ENCODE measurements at regions of chr15 and their contacts with region 1.

Region 1: DNA sequence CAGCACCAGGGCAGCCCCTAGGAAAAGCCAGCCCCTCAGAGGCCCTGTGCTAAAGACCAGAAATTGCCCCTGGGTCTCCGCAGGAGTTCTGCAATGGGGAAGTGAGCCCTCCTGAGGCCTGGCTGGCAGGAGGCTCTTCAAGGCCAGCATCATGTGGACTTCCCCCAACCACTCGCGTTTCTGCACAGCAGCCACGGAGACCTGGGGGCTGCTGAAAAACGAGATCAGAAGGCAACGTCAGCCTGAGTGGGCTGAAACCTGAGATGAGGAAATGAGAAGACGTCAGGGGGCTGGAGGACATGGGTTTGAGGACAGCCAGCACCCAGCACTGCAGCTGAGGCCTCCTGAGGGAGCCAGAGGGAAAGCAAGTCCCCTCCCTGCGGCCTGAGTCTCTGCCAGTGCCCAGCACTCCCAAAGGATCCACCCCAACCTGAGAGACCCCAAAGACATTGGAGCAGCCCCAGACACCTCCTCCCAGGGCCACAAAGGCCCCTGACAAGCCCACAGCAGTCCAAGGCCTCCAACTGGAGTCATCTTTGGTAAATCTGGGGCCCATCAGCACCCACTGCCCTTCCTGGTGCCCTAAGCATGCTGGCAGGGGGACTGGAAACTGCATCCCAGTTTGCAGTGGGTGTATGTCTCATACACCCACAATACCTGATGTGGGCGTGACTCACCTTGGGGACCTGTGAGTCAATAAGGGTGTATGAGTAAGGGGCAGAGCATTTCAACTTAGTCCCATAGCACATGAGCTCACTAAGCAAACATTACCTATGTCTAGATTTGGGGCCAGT is 29.2 kb upstream of the CYP11A1 start:
- DNase-seq: peak; percentile 82
- H3K4me3 Mint-ChIP-seq: peak overlapping the region; percentile 36
- H3K27ac Mint-ChIP-seq: peak overlapping the region; percentile 93
- H3K4me1 Mint-ChIP-seq: peaks cover 82% of the 10 kb centered on the region
- H3K27me3 Mint-ChIP-seq: no peaks in the 10 kb centered on the region

Region 2: GRCh38 chr15:74433592-74434262 is 37.1 kb after region 1 on chr15 and contains the start of gene SEMA7A:
- CTCF ChIA-PET with region 1: interaction called, 14 read pairs
- POLR2A ChIA-PET with region 1: interaction called, 13 read pairs
- intact Hi-C with region 1: no loop called
- DNase-seq: peak; percentile 90
- H3K4me3 Mint-ChIP-seq: peak within 1 kb of the TSS; percentile 86
- H3K27ac Mint-ChIP-seq: peak within 1 kb of the TSS; percentile 89
- H3K4me1 Mint-ChIP-seq: peaks cover 58% of the 10 kb centered on the region
- H3K27me3 Mint-ChIP-seq: no peaks in the 10 kb centered on the region
- total RNA-seq, gene SEMA7A: 65.9 to 68.4 TPM

Region 3: GRCh38 chr15:74438721-74439316 is 42.2 kb after region 1 on chr15:
- CTCF ChIA-PET with region 1: interaction called, 14 read pairs
- POLR2A ChIA-PET with region 1: interaction called, 13 read pairs
- intact Hi-C with region 1: no loop called
- DNase-seq: peak; percentile 87
- H3K4me3 Mint-ChIP-seq: no peak overlapping the region
- H3K27ac Mint-ChIP-seq: no peak overlapping the region
- H3K4me1 Mint-ChIP-seq: peaks cover 28% of the 10 kb centered on the region
- H3K27me3 Mint-ChIP-seq: no peaks in the 10 kb centered on the region

Region 4: GRCh38 chr15:75407083-75407482 is 1010.4 kb after region 1 on chr15:
- CTCF ChIA-PET with region 1: no interaction called
- POLR2A ChIA-PET with region 1: no interaction called
- intact Hi-C with region 1: no loop called
- DNase-seq: no peak
- H3K4me3 Mint-ChIP-seq: no peak overlapping the region
- H3K27ac Mint-ChIP-seq: peak overlapping the region; percentile 65
- H3K4me1 Mint-ChIP-seq: peaks cover 55% of the 10 kb centered on the region
- H3K27me3 Mint-ChIP-seq: no peaks in the 10 kb centered on the region